Natural killer cell (primary cell): ENCODE measurements at regions of chr14 and their contacts with region 1.

Region 1: DNA sequence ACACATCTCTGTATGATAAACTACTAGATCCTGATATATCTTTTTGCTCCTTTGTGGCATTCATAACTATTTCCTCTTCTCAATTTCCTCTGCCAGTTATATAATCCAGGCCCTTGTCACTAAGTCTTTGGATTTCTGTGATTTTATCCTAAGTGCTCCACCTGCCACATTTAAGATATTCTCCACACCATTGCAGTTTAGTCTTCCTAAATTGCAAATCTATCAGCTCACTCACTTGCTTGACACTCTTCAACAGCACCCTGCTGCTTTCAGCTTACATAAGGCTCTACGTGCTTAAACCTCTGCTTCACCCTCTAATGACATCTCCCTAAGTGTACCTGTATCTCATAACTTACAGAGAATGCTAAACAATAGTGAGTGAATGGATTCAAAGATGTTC is 1032.2 kb upstream of the SEL1L start:
- DNase-seq: no peak
- ATAC-seq: no peak
- H3K4me3 ChIP-seq: no peak overlapping the region
- H3K4me3 Mint-ChIP-seq: no peak overlapping the region
- H3K27ac ChIP-seq: no peak overlapping the region
- H3K27ac Mint-ChIP-seq: no peak overlapping the region
- H3K4me1 ChIP-seq: no peaks in the 10 kb centered on the region
- H3K4me1 Mint-ChIP-seq: no peaks in the 10 kb centered on the region
- H3K27me3 ChIP-seq: no peaks in the 10 kb centered on the region
- H3K27me3 Mint-ChIP-seq: no peaks in the 10 kb centered on the region
- CTCF ChIP-seq: no peak

Region 2: DNA sequence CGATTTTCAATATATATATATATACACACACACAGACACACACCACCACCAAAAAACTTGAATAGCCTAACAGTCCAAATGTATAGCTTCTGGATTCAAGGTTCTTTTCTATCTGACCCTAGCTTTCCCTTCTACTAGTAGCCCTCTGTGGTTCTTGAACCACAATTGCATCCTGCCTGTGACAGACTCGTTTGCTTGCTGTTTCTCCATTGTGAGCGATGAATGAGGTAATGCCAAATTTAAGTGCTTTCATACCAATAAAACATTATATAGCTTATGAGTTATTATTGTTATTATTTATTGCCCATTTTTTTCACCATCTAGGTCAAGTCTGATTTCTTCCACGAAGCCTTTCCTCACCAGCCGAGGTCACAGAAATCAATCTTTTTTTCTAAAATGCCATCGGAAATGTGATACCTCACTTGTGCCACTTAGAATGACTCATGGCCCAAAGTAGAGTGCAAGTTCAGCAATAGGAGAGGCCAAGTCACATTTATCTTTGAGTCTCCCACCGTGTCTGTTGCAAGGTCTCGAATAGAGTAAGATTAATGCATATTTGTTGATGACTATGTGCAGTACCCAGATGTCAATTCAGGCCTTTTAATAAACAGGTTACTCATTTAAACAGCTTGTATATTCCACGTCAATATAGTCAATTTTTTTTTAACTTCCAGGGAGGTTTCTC is 16.4 kb before region 1 on chr14:
- intact Hi-C with region 1: no loop called
- DNase-seq: no peak
- ATAC-seq: no peak
- H3K4me3 ChIP-seq: no peak overlapping the region
- H3K4me3 Mint-ChIP-seq: no peak overlapping the region
- H3K27ac ChIP-seq: no peak overlapping the region
- H3K27ac Mint-ChIP-seq: no peak overlapping the region
- H3K4me1 ChIP-seq: no peaks in the 10 kb centered on the region
- H3K4me1 Mint-ChIP-seq: no peaks in the 10 kb centered on the region
- H3K27me3 ChIP-seq: no peaks in the 10 kb centered on the region
- H3K27me3 Mint-ChIP-seq: no peaks in the 10 kb centered on the region
- CTCF ChIP-seq: no peak

Region 3: GRCh38 chr14:82595466-82595865 is 29.6 kb after region 1 on chr14:
- intact Hi-C with region 1: loop called (anchors 1 kb)
- DNase-seq: no peak
- ATAC-seq: no peak
- H3K4me3 ChIP-seq: no peak overlapping the region
- H3K4me3 Mint-ChIP-seq: no peak overlapping the region
- H3K27ac ChIP-seq: no peak overlapping the region
- H3K27ac Mint-ChIP-seq: no peak overlapping the region
- H3K4me1 ChIP-seq: no peaks in the 10 kb centered on the region
- H3K4me1 Mint-ChIP-seq: no peaks in the 10 kb centered on the region
- H3K27me3 ChIP-seq: no peaks in the 10 kb centered on the region
- H3K27me3 Mint-ChIP-seq: no peaks in the 10 kb centered on the region
- CTCF ChIP-seq: no peak